CD4-positive, alpha-beta memory T cell (primary cell): ENCODE measurements at regions of chr19 and their contacts with region 1.

Region 1: DNA sequence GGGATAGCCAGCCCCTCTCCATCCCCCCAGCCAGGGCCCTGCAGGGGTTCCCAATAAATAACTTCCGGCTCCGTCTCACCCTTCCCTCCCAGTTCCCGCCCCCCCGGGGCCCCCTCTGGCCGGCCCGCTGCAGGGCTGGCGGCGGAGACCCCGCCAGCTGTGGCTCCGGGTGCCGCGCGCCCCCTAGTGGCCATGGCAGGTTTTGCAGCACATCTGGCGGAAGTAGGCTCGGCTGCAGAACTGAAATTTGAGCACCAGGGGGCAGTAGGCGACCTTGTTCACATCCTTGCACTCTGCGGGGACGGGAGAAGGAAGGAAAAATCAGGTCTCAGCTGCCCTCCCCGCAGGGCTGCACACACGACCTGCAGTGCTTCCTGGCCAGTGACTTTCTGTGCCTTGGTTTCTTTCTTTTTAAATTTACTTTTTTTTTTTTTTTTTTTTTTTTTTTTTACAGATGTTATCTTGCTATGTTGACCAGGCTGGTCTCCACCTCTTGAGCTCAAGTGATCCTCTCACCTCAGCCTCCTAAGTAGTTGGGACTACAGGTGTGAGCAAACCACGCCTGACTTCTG is 3.6 kb upstream of the MYO1F start:
- DNase-seq: peak; percentile 79 to 86 (median 83)
- H3K4me3 ChIP-seq: no peak overlapping the region
- H3K4me3 Mint-ChIP-seq: peak overlapping the region in 1 of 8 donors; percentile 21
- H3K27ac ChIP-seq: no peak overlapping the region
- H3K27ac Mint-ChIP-seq: peak overlapping the region in 2 of 7 donors; percentile 61 to 70
- H3K4me1 ChIP-seq: peaks cover 35% of the 10 kb centered on the region
- H3K4me1 Mint-ChIP-seq: peaks cover 17 to 45% (median 29%) of the 10 kb centered on the region in 4 donors
- H3K27me3 ChIP-seq: no peaks in the 10 kb centered on the region
- H3K27me3 Mint-ChIP-seq: no peaks in the 10 kb centered on the region

Region 2: DNA sequence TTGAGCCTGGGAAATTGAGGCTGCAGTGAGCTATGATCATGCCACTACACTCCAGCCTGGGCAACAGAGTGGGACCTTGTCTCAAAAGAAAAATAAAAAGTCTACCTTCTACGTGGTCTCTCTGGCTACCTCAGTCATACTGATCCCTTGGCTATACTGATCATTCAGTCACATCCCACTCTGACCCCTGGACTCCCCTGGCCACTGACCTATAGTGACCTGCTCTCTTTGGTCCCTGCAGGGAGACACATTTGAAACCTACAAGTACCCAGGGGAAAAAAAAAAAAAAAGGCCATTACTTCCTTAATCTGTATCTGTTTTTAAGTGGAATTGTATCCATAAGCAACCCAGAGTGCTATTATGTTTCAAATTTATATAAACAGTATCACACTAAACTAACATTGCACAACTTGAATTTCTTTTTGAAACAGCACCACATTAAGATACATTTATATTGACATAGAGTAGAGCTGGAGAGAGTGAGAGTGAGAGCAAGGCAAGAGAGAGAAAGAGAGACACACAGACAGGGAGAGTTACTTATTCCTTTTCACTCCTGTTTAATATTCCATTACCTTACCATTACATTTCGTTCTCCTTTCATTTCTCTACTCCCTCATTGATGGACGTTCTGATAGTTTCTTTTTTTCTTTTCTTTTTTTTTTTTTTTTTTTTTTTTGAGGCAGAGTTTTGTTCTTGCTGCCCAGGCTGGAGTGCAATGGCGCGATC is 395.3 kb before region 1 on chr19:
- CTCF ChIA-PET with region 1: no interaction called
- POLR2A ChIA-PET with region 1: no interaction called
- intact Hi-C with region 1: no loop called
- DNase-seq: no peak
- H3K4me3 ChIP-seq: no peak overlapping the region
- H3K4me3 Mint-ChIP-seq: no peak overlapping the region
- H3K27ac ChIP-seq: no peak overlapping the region
- H3K27ac Mint-ChIP-seq: peak overlapping the region in 1 of 7 donors; percentile 72
- H3K4me1 ChIP-seq: peaks cover 12% of the 10 kb centered on the region
- H3K4me1 Mint-ChIP-seq: peaks cover 2 to 27% (median 11%) of the 10 kb centered on the region in 4 donors
- H3K27me3 ChIP-seq: no peaks in the 10 kb centered on the region
- H3K27me3 Mint-ChIP-seq: no peaks in the 10 kb centered on the region

Region 3: GRCh38 chr19:8342684-8343482 is 237.9 kb before region 1 on chr19 and contains the start of gene KANK3:
- CTCF ChIA-PET with region 1: no interaction called
- POLR2A ChIA-PET with region 1: no interaction called
- intact Hi-C with region 1: no loop called
- DNase-seq: peak; percentile 88 to 94 (median 89)
- H3K4me3 ChIP-seq: peak within 1 kb of the TSS; percentile 11 to 52
- H3K4me3 Mint-ChIP-seq: peak within 1 kb of the TSS; percentile 82 to 88 (median 86)
- H3K27ac ChIP-seq: peak within 1 kb of the TSS; percentile 43
- H3K27ac Mint-ChIP-seq: peak within 1 kb of the TSS; percentile 24 to 82 (median 70)
- H3K4me1 ChIP-seq: peaks cover 10% of the 10 kb centered on the region
- H3K4me1 Mint-ChIP-seq: peaks cover 0 to 13% (median 8%) of the 10 kb centered on the region in 4 donors
- H3K27me3 ChIP-seq: no peaks in the 10 kb centered on the region
- H3K27me3 Mint-ChIP-seq: peaks cover 0 to 7% of the 10 kb centered on the region in 2 donors
- total RNA-seq, gene KANK3: 5.0 to 6.3 TPM

Region 4: DNA sequence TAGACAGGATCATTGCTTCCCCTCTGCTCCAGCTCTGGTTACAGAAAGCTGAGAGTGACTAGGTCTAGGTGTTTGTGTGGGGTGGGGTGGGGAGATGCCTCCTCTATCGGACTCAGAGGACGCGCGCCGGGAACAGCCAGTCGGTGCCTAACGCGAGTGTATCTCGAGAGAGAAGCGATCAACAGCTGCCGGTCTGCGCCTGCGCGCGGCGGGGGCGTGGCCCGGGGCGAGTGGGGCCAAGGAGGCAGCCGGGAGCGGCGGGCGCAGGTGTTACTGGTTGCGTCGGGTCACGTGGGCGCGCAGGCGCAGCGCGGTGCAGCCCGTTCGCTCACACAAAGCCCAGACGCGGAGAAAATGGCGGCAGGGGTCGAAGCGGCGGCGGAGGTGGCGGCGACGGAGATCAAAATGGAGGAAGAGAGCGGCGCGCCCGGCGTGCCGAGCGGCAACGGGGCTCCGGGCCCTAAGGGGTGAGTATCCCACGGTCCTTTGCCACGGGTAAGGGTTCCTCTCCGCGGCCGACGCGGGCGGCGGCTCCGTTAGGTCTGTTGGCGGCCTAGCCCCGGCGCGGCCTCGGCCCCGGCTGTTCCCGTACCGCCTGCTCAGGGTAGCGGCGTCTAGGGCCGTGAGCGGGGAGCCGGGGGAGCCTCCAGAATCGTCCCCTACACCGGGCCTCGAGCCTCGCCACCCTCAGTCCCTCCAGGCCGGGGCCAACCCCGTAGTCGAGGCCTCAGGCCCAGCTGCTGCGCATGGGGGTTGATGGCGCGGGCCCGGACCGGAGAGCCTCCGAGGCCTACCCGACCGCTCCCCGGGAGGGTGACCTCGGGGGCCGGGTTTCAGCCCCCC is 135.9 kb before region 1 on chr19 and contains the start of gene HNRNPM:
- CTCF ChIA-PET with region 1: interaction called, 21 read pairs
- POLR2A ChIA-PET with region 1: interaction called, 13 read pairs
- intact Hi-C with region 1: no loop called
- DNase-seq: peak; percentile 99 to 100 (median 100)
- H3K4me3 ChIP-seq: peak within 1 kb of the TSS; percentile 26 to 85
- H3K4me3 Mint-ChIP-seq: peak within 1 kb of the TSS; percentile 95 to 99 (median 97)
- H3K27ac ChIP-seq: peak within 1 kb of the TSS; percentile 99
- H3K27ac Mint-ChIP-seq: peak within 1 kb of the TSS; percentile 91 to 99 (median 98)
- H3K4me1 ChIP-seq: peaks cover 40% of the 10 kb centered on the region
- H3K4me1 Mint-ChIP-seq: peaks cover 28 to 51% (median 36%) of the 10 kb centered on the region in 4 donors
- H3K27me3 ChIP-seq: no peaks in the 10 kb centered on the region
- H3K27me3 Mint-ChIP-seq: no peaks in the 10 kb centered on the region
- total RNA-seq, gene HNRNPM: 197 to 199 TPM

Region 5: DNA sequence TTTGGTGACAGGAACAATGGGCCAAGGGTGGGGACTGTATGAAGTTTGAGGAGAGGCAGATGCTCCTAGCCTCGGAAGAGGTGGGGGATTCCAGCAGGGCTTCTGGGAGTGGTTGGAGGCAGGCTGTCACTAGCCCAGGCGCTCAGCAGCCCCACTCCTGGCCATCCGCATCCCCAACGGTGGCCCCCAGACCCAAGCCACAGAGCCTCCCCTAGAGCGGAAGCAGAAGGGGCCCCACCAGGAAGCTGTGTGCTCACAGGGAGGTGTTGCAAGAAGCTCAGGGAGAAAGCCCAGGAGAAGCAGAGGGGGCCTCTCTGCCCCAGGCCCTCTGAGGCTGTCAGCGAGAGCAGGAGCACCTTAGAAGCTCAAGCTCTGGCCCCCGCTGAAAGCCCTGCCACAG is 86.6 kb before region 1 on chr19:
- CTCF ChIA-PET with region 1: interaction called, 30 read pairs
- POLR2A ChIA-PET with region 1: interaction called, 3 read pairs
- intact Hi-C with region 1: no loop called
- DNase-seq: no peak
- H3K4me3 ChIP-seq: no peak overlapping the region
- H3K4me3 Mint-ChIP-seq: no peak overlapping the region
- H3K27ac ChIP-seq: no peak overlapping the region
- H3K27ac Mint-ChIP-seq: peak overlapping the region; percentile 38 to 84 (median 64)
- H3K4me1 ChIP-seq: peaks cover 8% of the 10 kb centered on the region
- H3K4me1 Mint-ChIP-seq: peaks cover 4 to 17% (median 4%) of the 10 kb centered on the region in 4 donors
- H3K27me3 ChIP-seq: no peaks in the 10 kb centered on the region
- H3K27me3 Mint-ChIP-seq: no peaks in the 10 kb centered on the region

Region 6: DNA sequence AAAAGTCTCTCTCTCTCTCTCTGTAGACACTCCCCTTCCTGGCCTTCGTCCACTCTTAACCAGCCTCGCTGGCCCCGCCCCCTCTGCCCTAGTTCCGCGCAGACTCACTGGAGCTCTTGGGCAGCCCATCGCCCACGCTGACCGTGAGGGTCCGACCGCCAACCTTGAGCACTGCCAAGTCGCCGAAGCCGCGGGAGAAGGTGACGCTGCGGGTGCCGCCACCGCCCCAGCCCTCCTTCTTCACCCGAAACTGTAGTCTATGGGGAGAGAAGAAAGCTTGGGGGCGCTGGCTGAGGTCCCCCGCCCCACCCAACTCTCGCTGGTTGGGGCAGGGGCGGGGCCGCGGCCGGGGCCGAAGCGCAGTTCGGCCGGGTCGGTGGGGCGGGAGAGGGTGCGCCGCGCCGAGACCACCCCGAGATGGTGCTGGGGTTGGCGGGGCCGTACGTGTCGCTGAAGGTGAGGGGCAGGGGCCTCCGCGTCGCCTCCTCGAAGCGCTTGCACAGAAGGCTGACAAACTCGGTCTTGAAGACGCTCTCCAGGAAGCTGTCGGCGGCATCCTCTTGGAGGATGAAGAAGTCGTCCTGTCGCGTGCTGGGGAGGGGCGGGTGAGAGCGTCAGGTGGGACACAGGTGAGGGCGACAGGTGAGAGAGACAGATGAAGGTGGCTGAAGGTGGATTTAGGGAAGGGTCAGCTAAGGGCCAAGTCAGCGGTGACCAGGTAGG is 54.3 kb before region 1 on chr19:
- CTCF ChIA-PET with region 1: interaction called, 13 read pairs
- POLR2A ChIA-PET with region 1: interaction called, 461 read pairs
- intact Hi-C with region 1: no loop called
- DNase-seq: no peak
- H3K4me3 ChIP-seq: no peak overlapping the region
- H3K4me3 Mint-ChIP-seq: no peak overlapping the region
- H3K27ac ChIP-seq: no peak overlapping the region
- H3K27ac Mint-ChIP-seq: peak overlapping the region in 5 of 7 donors; percentile 16 to 92 (median 70)
- H3K4me1 ChIP-seq: peaks cover 4% of the 10 kb centered on the region
- H3K4me1 Mint-ChIP-seq: peaks cover 6 to 16% (median 13%) of the 10 kb centered on the region in 4 donors
- H3K27me3 ChIP-seq: no peaks in the 10 kb centered on the region
- H3K27me3 Mint-ChIP-seq: no peaks in the 10 kb centered on the region

Region 7: DNA sequence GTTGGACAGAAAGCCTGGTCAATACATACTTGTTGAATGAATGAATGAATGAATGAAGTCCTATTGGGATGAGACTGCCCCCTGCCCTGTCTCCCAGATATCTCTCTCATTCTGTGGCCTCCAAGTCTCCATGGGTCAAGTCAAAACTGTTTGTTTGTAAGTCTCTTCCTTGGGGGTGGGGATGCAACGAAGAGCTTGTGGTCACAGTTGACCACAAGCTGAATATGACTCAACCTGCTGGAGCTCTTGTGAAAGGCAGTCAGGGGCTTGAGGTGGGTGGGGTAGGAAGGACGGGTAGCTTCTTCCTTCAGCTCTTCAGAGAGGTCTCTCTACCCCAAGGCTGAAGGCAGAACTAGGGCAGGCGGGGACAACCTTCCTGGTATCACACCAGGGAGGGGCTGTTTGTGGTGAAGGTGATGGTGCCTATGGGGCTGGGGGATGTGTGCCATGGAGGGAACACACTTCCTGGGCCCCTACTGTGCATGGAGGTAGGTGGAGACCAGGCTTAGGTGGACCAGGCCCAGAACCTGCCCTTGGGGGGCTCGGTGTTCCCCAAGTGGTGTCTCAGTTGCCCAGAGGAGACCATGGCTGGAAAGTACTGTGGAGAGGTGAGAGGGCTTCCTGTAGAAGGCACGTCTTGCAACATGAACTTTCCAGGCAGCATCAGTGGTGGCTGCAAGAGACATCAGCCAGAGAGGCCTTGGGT is 11.6 kb before region 1 on chr19:
- CTCF ChIA-PET with region 1: interaction called, 179 read pairs
- POLR2A ChIA-PET with region 1: interaction called, 91 read pairs
- intact Hi-C with region 1: loop called (anchors 1 kb)
- DNase-seq: peak; percentile 69 to 93 (median 77)
- H3K4me3 ChIP-seq: peak overlapping the region; percentile 36 to 60
- H3K4me3 Mint-ChIP-seq: peak overlapping the region; percentile 60 to 97 (median 83)
- H3K27ac ChIP-seq: peak overlapping the region; percentile 41
- H3K27ac Mint-ChIP-seq: peak overlapping the region; percentile 92 to 99 (median 95)
- H3K4me1 ChIP-seq: peaks cover 96% of the 10 kb centered on the region
- H3K4me1 Mint-ChIP-seq: peaks cover 44 to 88% (median 68%) of the 10 kb centered on the region in 4 donors
- H3K27me3 ChIP-seq: no peaks in the 10 kb centered on the region
- H3K27me3 Mint-ChIP-seq: no peaks in the 10 kb centered on the region

Region 8: DNA sequence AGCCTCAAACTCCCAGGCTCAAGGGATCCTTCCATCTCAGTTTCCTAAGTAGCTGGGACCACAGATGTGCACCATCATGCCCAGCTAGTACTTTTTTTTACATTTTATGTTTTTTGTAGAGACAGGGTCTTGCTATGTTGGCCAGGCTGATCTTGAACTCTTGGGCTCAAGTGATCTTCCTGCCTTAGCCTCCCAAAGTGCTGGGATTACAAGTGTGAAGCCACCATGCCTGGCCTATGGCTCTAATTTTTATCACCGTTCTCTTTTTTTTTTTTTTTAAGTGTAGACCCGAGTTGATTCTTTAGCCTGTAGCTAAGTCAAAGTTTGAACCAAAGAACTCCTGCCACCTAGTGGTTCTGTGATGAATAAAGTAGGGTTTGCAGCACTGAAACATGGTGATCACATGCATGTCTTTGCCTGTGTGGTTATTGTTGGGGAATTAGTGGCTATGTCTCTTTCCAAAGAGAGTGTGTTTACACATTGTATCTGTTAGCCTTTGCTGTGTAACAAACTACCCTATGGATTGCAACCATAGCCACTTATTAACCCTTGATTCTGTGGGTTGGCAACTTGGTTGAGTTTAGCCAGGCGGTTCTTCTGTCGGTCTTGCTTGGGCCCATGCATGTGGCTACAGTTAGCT is 61.2 kb after region 1 on chr19:
- CTCF ChIA-PET with region 1: interaction called, 76 read pairs
- POLR2A ChIA-PET with region 1: interaction called, 6 read pairs
- intact Hi-C with region 1: loop called (anchors 1 kb)
- DNase-seq: peak in 4 of 5 donors; percentile 44 to 53 (median 48)
- H3K4me3 ChIP-seq: no peak overlapping the region
- H3K4me3 Mint-ChIP-seq: no peak overlapping the region
- H3K27ac ChIP-seq: no peak overlapping the region
- H3K27ac Mint-ChIP-seq: no peak overlapping the region
- H3K4me1 ChIP-seq: no peaks in the 10 kb centered on the region
- H3K4me1 Mint-ChIP-seq: peaks cover 0 to 4% (median under 1%) of the 10 kb centered on the region in 4 donors
- H3K27me3 ChIP-seq: no peaks in the 10 kb centered on the region
- H3K27me3 Mint-ChIP-seq: peaks cover 16 to 19% of the 10 kb centered on the region in 2 donors